BJ (cell line): ENCODE measurements at regions of chr9 and their contacts with region 1.

Region 1: GRCh38 chr9:109411798-109412352 is 86.2 kb downstream of the PTPN3 start:
- DNase-seq: peak; percentile 4
- H3K4me3 ChIP-seq: no peak overlapping the region
- H3K27me3 ChIP-seq: 0 out of 2 replicates have a peak, but pooled peaks cover 1% of the 10 kb centered on the region
- CTCF ChIP-seq: peak; percentile 85

Region 2: GRCh38 chr9:109401168-109401989 is 10.5 kb before region 1 on chr9:
- CTCF ChIA-PET with region 1: interaction called, 15 read pairs
- POLR2A ChIA-PET with region 1: no interaction called
- DNase-seq: no peak
- H3K4me3 ChIP-seq: no peak overlapping the region
- H3K27me3 ChIP-seq: no peaks in the 10 kb centered on the region
- CTCF ChIP-seq: peak; percentile 78

Region 3: GRCh38 chr9:110069326-110070248 is 657.7 kb after region 1 on chr9:
- CTCF ChIA-PET with region 1: no interaction called
- POLR2A ChIA-PET with region 1: no interaction called
- DNase-seq: peak; percentile 96
- H3K4me3 ChIP-seq: peak overlapping the region; percentile 0; the same call in 1 of the 2 replicates
- H3K27me3 ChIP-seq: no peaks in the 10 kb centered on the region
- CTCF ChIP-seq: no peak